ENCODE measurements at regions of chr14 and their contacts with region 1.

Region 1: GRCh38 chr14:55270832-55271565 is at the start of gene FBXO34:
- DNase-seq: peak; percentile 89 to 97
- ATAC-seq: peak; percentile 91 to 98
- H3K4me3 ChIP-seq: peak within 1 kb of the TSS; percentile 92
- H3K27ac ChIP-seq: peak within 1 kb of the TSS; percentile 90 to 94
- H3K4me1 ChIP-seq: peaks cover 29% of the 10 kb centered on the region; the same call in 2 of the 3 replicates
- CTCF ChIP-seq: peak; percentile 99
- EP300 ChIP-seq: no peak
- POLR2A ChIP-seq: peak; percentile 94
- RAD21 ChIP-seq: peak; percentile 76 to 86
- polyA plus RNA-seq, gene FBXO34: 27.4 and 28.0 TPM in 2 replicates

Region 2: GRCh38 chr14:55212634-55213033 is 58.4 kb before region 1 on chr14:
- CTCF ChIA-PET with region 1: interaction called, 10 read pairs
- POLR2A ChIA-PET with region 1: no interaction called
- DNase-seq: no peak
- ATAC-seq: peak in 1 of 2 experiments; percentile 32; a peak in 3 of 6 replicates
- H3K4me3 ChIP-seq: no peak overlapping the region
- H3K27ac ChIP-seq: no peak overlapping the region
- H3K4me1 ChIP-seq: no peaks in the 10 kb centered on the region
- CTCF ChIP-seq: no peak
- EP300 ChIP-seq: no peak
- POLR2A ChIP-seq: no peak
- RAD21 ChIP-seq: no peak

Region 3: DNA sequence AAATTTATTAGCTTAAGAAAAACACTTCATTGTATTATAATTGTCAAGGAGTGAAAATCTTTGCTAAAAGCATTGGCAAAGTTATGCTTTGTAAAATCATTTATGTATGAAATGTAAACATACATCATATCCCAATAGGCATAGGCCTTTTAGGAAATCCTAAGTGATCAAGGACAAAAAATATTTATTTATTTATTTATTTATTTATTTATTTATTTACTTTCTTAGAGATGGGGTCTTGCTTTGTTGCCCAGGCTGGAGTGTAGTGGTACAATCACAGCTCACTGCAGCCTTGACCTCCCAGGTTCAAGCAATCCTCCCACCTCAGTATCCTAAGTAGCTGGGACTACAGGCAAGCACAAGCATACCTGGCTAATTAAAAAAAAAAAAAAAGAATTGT is 47.6 kb before region 1 on chr14:
- CTCF ChIA-PET with region 1: no interaction called
- POLR2A ChIA-PET with region 1: no interaction called
- DNase-seq: no peak
- ATAC-seq: no peak
- H3K4me3 ChIP-seq: no peak overlapping the region
- H3K27ac ChIP-seq: no peak overlapping the region
- H3K4me1 ChIP-seq: no peaks in the 10 kb centered on the region
- CTCF ChIP-seq: no peak
- EP300 ChIP-seq: no peak
- POLR2A ChIP-seq: no peak
- RAD21 ChIP-seq: no peak

Region 4: DNA sequence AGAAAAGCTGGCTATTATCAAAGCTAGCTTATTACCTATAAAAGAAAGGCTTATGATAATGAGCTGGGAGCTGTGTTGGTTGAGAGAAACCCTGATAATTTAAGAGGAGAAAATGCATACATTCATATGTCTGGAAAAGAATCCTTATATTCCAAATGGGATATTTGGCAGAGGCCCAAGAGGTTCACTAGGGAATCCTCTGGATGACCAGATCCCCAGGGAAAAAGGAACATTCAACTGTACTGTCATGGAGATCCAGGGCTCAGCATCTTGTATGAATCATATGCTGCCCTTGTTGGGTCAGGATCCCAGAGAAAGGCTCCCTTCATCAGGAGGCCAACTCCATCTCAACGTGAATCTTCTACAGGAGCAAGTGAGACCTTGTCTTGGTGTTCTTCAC is 16.4 kb before region 1 on chr14:
- CTCF ChIA-PET with region 1: interaction called, 59 read pairs
- POLR2A ChIA-PET with region 1: no interaction called
- DNase-seq: no peak
- ATAC-seq: peak in 1 of 2 experiments; percentile 39; a peak in 1 of 6 replicates
- H3K4me3 ChIP-seq: no peak overlapping the region
- H3K27ac ChIP-seq: no peak overlapping the region
- H3K4me1 ChIP-seq: no peaks in the 10 kb centered on the region
- CTCF ChIP-seq: no peak
- EP300 ChIP-seq: no peak
- POLR2A ChIP-seq: no peak
- RAD21 ChIP-seq: no peak

Region 5: DNA sequence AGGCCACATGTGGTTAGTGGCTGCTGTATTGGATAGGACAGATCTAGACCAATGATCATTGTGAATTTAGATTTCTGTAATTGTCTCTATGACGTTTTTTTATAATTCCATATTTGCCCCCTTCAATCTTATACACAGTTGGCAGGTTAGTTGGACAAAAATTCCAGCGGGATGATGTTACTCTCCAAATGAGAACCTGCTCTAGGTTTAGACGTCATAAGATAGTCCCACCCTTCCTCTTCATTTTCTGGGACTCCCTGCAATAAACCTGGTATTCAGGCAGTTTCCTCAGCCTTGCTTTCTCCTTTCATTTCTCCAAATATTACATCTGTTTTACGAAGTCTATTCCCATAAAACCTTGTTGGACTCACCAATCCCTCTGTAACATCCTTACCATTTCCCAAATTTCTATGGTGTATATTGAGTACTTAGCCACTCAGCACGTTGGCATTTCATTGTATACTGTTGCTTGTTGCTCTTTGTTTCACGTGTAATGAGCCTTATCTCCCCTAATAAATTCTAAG is 10.4 kb after region 1 on chr14:
- CTCF ChIA-PET with region 1: interaction called, 16 read pairs
- POLR2A ChIA-PET with region 1: no interaction called
- DNase-seq: no peak
- ATAC-seq: no peak
- H3K4me3 ChIP-seq: no peak overlapping the region
- H3K27ac ChIP-seq: no peak overlapping the region
- H3K4me1 ChIP-seq: peaks cover 7% of the 10 kb centered on the region; the same call in 2 of the 3 replicates
- CTCF ChIP-seq: no peak
- EP300 ChIP-seq: no peak
- POLR2A ChIP-seq: no peak
- RAD21 ChIP-seq: no peak

Region 6: DNA sequence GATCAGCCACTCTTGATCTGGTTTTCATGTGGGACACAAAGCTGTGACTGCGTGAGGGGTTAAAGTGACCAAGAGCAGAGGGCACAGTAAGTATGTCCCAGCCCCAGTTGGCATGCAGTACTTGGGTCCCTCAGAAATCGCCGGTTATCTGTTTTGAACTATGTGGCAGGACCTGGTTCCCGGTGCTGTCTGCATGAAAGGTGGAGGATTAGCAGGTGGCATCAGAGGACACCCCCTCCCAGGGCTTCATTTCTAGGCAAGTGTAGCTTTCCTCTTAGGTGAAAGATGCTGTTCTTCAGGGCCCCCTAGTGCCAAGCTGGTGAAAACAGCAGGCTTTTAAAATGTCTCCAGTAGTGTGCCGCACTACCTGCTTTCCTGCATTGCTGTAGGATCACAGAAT is 83.5 kb after region 1 on chr14:
- CTCF ChIA-PET with region 1: interaction called, 19 read pairs
- POLR2A ChIA-PET with region 1: interaction called, 3 read pairs
- DNase-seq: peak; percentile 44 to 53
- ATAC-seq: peak; percentile 81 to 89; a peak in 5 of 6 replicates
- H3K4me3 ChIP-seq: no peak overlapping the region
- H3K27ac ChIP-seq: no peak overlapping the region
- H3K4me1 ChIP-seq: no peaks in the 10 kb centered on the region
- CTCF ChIP-seq: peak; percentile 59
- EP300 ChIP-seq: no peak
- POLR2A ChIP-seq: no peak
- RAD21 ChIP-seq: peak; percentile 66 to 74

Region 7: GRCh38 chr14:55373784-55374705 is 103.0 kb after region 1 on chr14:
- CTCF ChIA-PET with region 1: interaction called, 10 read pairs
- POLR2A ChIA-PET with region 1: no interaction called
- DNase-seq: no peak
- ATAC-seq: no peak
- H3K4me3 ChIP-seq: no peak overlapping the region
- H3K27ac ChIP-seq: no peak overlapping the region
- H3K4me1 ChIP-seq: no peaks in the 10 kb centered on the region
- CTCF ChIP-seq: no peak
- EP300 ChIP-seq: no peak
- POLR2A ChIP-seq: no peak
- RAD21 ChIP-seq: no peak

Region 8: DNA sequence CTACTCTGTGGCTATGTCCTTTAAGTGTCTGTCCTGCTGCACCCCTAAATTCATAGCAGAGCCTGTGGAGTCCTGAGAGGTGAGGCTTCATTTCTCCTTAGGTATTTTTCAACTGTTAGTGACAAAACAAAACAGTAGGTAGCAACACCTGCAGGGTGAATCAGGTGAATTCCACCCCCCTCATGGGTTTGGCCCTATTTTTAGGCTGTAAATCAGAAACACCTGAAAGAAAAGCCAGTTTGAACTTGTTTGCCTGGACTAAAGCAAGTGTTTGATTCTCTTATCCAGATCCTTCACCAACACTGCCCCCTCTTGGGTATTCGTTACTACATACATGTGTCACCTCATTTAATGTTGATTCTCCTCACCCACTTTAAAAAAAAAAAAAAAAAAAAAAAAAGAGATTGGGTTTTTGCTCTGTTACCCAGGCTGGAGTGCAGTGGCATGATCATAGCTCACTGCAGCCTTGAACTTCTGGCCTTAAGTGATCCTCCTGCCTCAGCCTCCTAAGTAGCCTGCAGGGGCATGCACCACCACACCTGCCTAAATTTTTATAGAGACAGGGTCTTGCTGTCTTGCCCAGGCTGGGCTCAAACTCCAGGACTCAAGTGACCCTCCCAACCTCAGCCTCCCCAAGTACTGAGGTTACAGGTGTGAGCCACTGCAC is 159.2 kb after region 1 on chr14:
- CTCF ChIA-PET with region 1: interaction called, 18 read pairs
- POLR2A ChIA-PET with region 1: no interaction called
- DNase-seq: peak; percentile 64 to 79
- ATAC-seq: peak; percentile 81 to 91; a peak in 5 of 6 replicates
- H3K4me3 ChIP-seq: no peak overlapping the region
- H3K27ac ChIP-seq: no peak overlapping the region
- H3K4me1 ChIP-seq: no peaks in the 10 kb centered on the region
- CTCF ChIP-seq: peak; percentile 57
- EP300 ChIP-seq: no peak
- POLR2A ChIP-seq: no peak
- RAD21 ChIP-seq: peak; percentile 61 to 62

Region 9: DNA sequence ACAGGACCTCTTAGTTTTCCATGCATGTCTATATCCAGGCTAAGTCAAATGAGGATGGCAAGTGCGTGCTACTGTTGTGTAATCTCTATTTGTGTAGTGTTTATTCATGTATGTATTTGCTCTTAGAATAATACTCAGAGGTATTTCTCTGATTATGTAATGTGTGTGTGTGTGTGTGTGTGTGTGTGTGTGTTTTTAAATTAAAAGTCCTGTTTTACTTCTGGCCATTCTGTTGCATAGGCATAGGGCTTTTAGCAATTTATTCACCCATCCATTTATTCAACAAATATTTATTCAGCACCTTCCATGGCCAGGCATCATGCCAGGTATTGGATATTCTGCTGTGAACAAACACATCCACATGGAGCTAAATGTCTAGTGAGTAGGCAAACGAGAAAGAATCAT is 910.7 kb after region 1 on chr14:
- CTCF ChIA-PET with region 1: no interaction called
- POLR2A ChIA-PET with region 1: no interaction called
- DNase-seq: peak in 1 of 2 experiments; percentile 81
- ATAC-seq: peak; percentile 63 to 86; a peak in 4 of 6 replicates
- H3K4me3 ChIP-seq: no peak overlapping the region
- H3K27ac ChIP-seq: peak overlapping the region; percentile 8 to 47; a peak in 2 of 6 replicates
- H3K4me1 ChIP-seq: peaks cover 35% of the 10 kb centered on the region
- CTCF ChIP-seq: no peak
- EP300 ChIP-seq: peak; percentile 30 to 54; a peak in 2 of 5 replicates
- POLR2A ChIP-seq: no peak
- RAD21 ChIP-seq: 0 out of 5 replicates have a peak, but pooled peaks of 1 of the 2 experiments have one; percentile 42

Measured in A549 (cell line).